Dendritic cell treated with granulocyte-macrophage colony-stimulating factor and Interleukin-4, amounts not matched to agents 40 ng/mL and 50 ng/mL, for 4 days (primary cell): ENCODE measurements at regions of chr4 and their contacts with region 1.

Region 1: GRCh38 chr4:107719922-107720722 is at the start of gene PAPSS1:
- H3K4me3 Mint-ChIP-seq: peak within 1 kb of the TSS; percentile 89
- H3K27ac Mint-ChIP-seq: peak within 1 kb of the TSS; percentile 85
- H3K4me1 Mint-ChIP-seq: peaks cover 32% of the 10 kb centered on the region
- H3K27me3 Mint-ChIP-seq: peaks cover 8% of the 10 kb centered on the region

Region 2: GRCh38 chr4:107579099-107579498 is 141.0 kb before region 1 on chr4:
- intact Hi-C with region 1: no loop called
- H3K4me3 Mint-ChIP-seq: no peak overlapping the region
- H3K27ac Mint-ChIP-seq: no peak overlapping the region
- H3K4me1 Mint-ChIP-seq: no peaks in the 10 kb centered on the region
- H3K27me3 Mint-ChIP-seq: no peaks in the 10 kb centered on the region

Region 3: GRCh38 chr4:107683873-107684272 is 36.2 kb before region 1 on chr4:
- intact Hi-C with region 1: loop called (anchors 5 kb)
- H3K4me3 Mint-ChIP-seq: no peak overlapping the region
- H3K27ac Mint-ChIP-seq: no peak overlapping the region
- H3K4me1 Mint-ChIP-seq: peaks cover 13% of the 10 kb centered on the region
- H3K27me3 Mint-ChIP-seq: no peaks in the 10 kb centered on the region

Region 4: GRCh38 chr4:107689912-107690565 is 30.1 kb before region 1 on chr4:
- intact Hi-C with region 1: loop called (anchors 1 kb)
- H3K4me3 Mint-ChIP-seq: no peak overlapping the region
- H3K27ac Mint-ChIP-seq: no peak overlapping the region
- H3K4me1 Mint-ChIP-seq: peaks cover 18% of the 10 kb centered on the region
- H3K27me3 Mint-ChIP-seq: no peaks in the 10 kb centered on the region

Region 5: GRCh38 chr4:109406338-109406931 is 1686.3 kb after region 1 on chr4:
- intact Hi-C with region 1: no loop called
- H3K4me3 Mint-ChIP-seq: no peak overlapping the region
- H3K27ac Mint-ChIP-seq: no peak overlapping the region
- H3K4me1 Mint-ChIP-seq: no peaks in the 10 kb centered on the region
- H3K27me3 Mint-ChIP-seq: peaks cover 9% of the 10 kb centered on the region